SK-N-SH (cell line): ENCODE measurements at regions of chr3 and their contacts with region 1.

Region 1: GRCh38 chr3:127544192-127544802 is 46.2 kb downstream of the TPRA1 start:
- DNase-seq: peak; percentile 91
- H3K4me3 ChIP-seq: no peak overlapping the region; a peak in 1 of 4 replicates
- H3K27ac ChIP-seq: no peak overlapping the region
- H3K4me1 ChIP-seq: peaks cover 0 to 29% of the 10 kb centered on the region in 2 experiments; a peak in 1 of 4 replicates
- H3K27me3 ChIP-seq: no peaks in the 10 kb centered on the region
- CTCF ChIP-seq: peak; percentile 75
- EP300 ChIP-seq: no peak
- RAD21 ChIP-seq: peak; percentile 81

Region 2: DNA sequence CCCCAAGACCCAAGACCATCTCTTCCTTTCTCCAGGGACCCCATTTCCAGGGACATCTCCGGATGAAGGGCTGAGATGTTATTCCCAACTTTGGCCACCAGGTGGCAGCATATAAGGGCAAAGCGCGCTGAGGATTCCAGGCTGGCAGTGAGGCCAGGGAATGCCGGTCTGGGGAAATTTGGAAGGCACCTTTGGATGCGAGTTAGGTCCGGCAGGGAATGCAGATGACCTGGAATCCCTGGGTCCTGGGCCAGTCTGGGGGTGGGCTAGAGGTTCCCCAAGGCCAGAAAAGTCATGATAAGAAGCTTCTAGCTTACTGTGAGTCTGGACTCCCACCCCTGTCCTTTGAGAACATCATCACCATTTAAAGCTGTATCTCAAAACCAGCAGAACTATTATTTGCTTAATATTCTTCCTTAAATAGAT is 1021.9 kb before region 1 on chr3:
- CTCF ChIA-PET with region 1: interaction called, 21 read pairs
- POLR2A ChIA-PET with region 1: no interaction called
- DNase-seq: peak; percentile 88
- H3K4me3 ChIP-seq: peak overlapping the region in 1 of 2 experiments; percentile 18; a peak in 1 of 4 replicates
- H3K27ac ChIP-seq: no peak overlapping the region
- H3K4me1 ChIP-seq: peaks cover 0 to 18% of the 10 kb centered on the region in 2 experiments; a peak in 1 of 4 replicates
- H3K27me3 ChIP-seq: no peaks in the 10 kb centered on the region; the same call in 1 of the 2 replicates
- CTCF ChIP-seq: peak; percentile 79
- EP300 ChIP-seq: no peak
- RAD21 ChIP-seq: peak; percentile 83

Region 3: GRCh38 chr3:127455541-127456450 is 88.5 kb before region 1 on chr3:
- CTCF ChIA-PET with region 1: interaction called, 64 read pairs
- POLR2A ChIA-PET with region 1: no interaction called
- DNase-seq: peak; percentile 98
- H3K4me3 ChIP-seq: peak overlapping the region; percentile 40 to 58; a peak in 3 of 4 replicates
- H3K27ac ChIP-seq: no peak overlapping the region; a peak in 1 of 4 replicates
- H3K4me1 ChIP-seq: peaks cover 7 to 13% of the 10 kb centered on the region in 2 experiments; a peak in 2 of 4 replicates
- H3K27me3 ChIP-seq: no peaks in the 10 kb centered on the region
- CTCF ChIP-seq: peak; percentile 81
- EP300 ChIP-seq: peak in 1 of 2 experiments; percentile 19; a peak in 1 of 4 replicates
- RAD21 ChIP-seq: peak; percentile 91

Region 4: DNA sequence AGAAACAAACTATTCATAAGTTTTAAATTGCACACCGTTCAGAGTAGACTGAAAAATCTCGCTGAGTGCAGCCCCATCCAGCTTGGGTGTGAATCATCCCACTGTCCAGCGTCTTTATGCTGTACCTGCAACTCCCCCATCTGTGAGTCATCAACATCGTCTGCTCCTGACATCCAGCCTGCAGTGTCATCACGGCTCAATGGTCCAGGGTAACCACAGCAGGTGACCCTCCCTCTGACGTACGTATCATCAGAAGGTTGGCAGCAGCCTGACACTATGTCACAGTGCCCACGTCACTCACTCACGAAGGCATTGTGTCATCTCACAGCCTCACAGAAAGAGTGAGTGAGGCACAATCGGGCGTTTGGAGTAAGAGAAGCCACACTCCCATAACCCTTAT is 18.9 kb before region 1 on chr3:
- CTCF ChIA-PET with region 1: interaction called, 72 read pairs
- POLR2A ChIA-PET with region 1: no interaction called
- DNase-seq: no peak
- H3K4me3 ChIP-seq: no peak overlapping the region
- H3K27ac ChIP-seq: no peak overlapping the region
- H3K4me1 ChIP-seq: peaks cover 0 to 5% of the 10 kb centered on the region in 2 experiments; a peak in 1 of 4 replicates
- H3K27me3 ChIP-seq: no peaks in the 10 kb centered on the region
- CTCF ChIP-seq: no peak
- EP300 ChIP-seq: no peak
- RAD21 ChIP-seq: no peak

Region 5: DNA sequence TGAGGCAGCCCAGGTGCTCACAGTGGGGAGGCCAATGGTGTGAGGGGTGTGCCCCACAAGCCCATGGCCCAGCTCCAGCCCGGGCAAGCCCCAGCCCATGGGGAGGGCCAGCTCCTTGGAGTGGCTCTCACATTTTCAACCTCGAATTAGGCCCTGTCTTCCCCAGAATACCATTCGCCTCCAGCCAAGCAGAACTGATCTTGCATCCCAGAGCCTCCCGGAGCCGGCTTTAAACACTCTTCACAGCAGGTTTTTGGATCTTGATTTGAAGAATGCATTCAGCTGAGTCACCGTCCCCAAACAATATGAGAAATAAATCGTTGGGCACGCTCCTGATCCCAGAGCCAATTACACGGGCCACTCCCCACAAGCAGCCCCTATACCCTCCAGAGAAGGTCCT is 22.5 kb after region 1 on chr3:
- CTCF ChIA-PET with region 1: interaction called, 15 read pairs
- POLR2A ChIA-PET with region 1: no interaction called
- DNase-seq: no peak
- H3K4me3 ChIP-seq: no peak overlapping the region
- H3K27ac ChIP-seq: no peak overlapping the region
- H3K4me1 ChIP-seq: no peaks in the 10 kb centered on the region; a peak in 1 of 4 replicates
- H3K27me3 ChIP-seq: no peaks in the 10 kb centered on the region
- CTCF ChIP-seq: no peak
- EP300 ChIP-seq: no peak
- RAD21 ChIP-seq: no peak

Region 6: DNA sequence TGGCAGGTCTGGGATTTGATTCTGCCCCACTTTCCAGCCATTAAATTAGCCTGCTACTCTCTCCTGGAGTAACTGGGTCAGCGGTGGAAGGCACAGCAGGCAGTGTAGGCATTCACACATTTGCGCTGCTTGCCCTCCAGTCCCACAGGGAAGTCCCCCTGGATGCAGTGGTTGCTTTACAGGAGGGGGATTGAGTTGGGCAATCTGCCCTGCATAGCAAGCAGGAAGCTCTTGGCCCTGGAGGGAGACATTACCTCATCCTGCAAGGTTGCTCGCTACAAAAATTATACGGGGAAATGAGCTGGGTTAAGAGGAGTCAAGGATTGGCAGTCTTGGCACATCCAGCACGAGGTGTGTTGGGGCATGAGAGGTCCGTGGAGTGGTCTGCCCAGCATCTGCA is 68.7 kb after region 1 on chr3:
- CTCF ChIA-PET with region 1: no interaction called
- POLR2A ChIA-PET with region 1: no interaction called
- DNase-seq: no peak
- H3K4me3 ChIP-seq: no peak overlapping the region
- H3K27ac ChIP-seq: no peak overlapping the region
- H3K4me1 ChIP-seq: peaks cover 0 to 8% of the 10 kb centered on the region in 2 experiments; a peak in 1 of 4 replicates
- H3K27me3 ChIP-seq: no peaks in the 10 kb centered on the region
- CTCF ChIP-seq: no peak
- EP300 ChIP-seq: no peak
- RAD21 ChIP-seq: no peak